Motor neuron (in vitro differentiated cells): ENCODE measurements at regions of chr12 and their contacts with region 1.

Region 1: DNA sequence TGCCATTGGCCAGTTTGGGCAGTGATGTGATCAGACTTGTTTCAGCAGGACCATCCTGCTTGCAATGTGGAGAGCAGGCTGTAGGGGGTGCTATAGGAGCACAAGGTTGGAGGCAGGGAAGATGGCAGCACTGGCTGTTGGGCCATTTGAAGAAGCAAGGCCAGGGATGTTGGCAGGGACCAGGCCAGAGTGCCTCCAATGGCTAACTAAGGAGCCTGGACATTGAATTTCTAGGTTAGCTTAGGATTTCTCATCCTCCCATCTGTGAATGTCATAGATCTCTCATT is 23.5 kb downstream of the FGF23 start:
- ATAC-seq: peak in 3 of 8 experiments; percentile 41 to 74 (median 63)
- H3K4me3 ChIP-seq: no peak overlapping the region
- H3K27ac ChIP-seq: no peak overlapping the region
- H3K4me1 ChIP-seq: no peaks in the 10 kb centered on the region

Region 2: GRCh38 chr12:4506870-4507269 is 150.9 kb after region 1 on chr12:
- in situ Hi-C with region 1: loop called in 1 of 9 experiments (anchors 25 kb)
- ATAC-seq: no peak
- H3K4me3 ChIP-seq: no peak overlapping the region
- H3K27ac ChIP-seq: no peak overlapping the region
- H3K4me1 ChIP-seq: no peaks in the 10 kb centered on the region

Region 3: GRCh38 chr12:4538207-4539160 is 182.5 kb after region 1 on chr12 and contains the start of gene RAD51AP1:
- in situ Hi-C with region 1: loop called in 2 of 9 experiments (anchors 25 kb)
- ATAC-seq: peak; percentile 99 to 100 (median 100)
- H3K4me3 ChIP-seq: peak within 1 kb of the TSS; percentile 69 to 89 (median 87)
- H3K27ac ChIP-seq: peak within 1 kb of the TSS; percentile 97 to 99
- H3K4me1 ChIP-seq: peaks cover 0 to 6% of the 10 kb centered on the region in 2 donors
- total RNA-seq, gene RAD51AP1: 0.25 to 32.1 (median 5.5) TPM